Activated CD8-positive, alpha-beta memory T cell treated with anti-CD3 and anti-CD28 coated beads, Interleukin-2, amount 10 ng/mL, durations not matched to agents 7 days and 5 days (primary cell): ENCODE measurements at regions of chr4 and their contacts with region 1.

Region 1: DNA sequence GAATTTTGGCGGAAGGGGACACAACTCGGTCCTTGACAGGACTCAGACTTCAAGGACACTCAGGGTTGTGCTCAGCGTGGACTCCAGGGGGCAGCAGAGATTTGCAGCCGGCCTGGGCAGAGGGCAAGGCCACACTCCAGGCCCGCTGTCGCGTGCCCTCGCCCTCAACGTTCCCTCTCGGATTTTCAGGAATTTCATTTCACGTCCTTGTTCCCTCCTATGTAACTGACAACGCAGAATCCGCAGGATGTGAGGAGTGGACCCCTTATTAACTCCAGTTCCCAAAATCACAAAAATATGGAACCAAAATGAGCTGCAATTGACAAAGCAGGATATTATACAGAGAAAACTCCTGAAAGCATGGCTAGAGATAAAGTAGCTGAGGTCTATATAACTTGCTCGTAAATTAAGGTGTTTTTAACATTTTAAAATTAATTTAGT is 21.0 kb upstream of the DCTD start:
- DNase-seq: peak; percentile 74
- ATAC-seq: peak; percentile 97
- H3K4me3 Mint-ChIP-seq: no peak overlapping the region
- H3K27ac Mint-ChIP-seq: no peak overlapping the region
- H3K4me1 Mint-ChIP-seq: peaks cover 3% of the 10 kb centered on the region
- H3K27me3 Mint-ChIP-seq: peaks cover 24% of the 10 kb centered on the region

Region 2: GRCh38 chr4:182955411-182955810 is 17.2 kb after region 1 on chr4:
- CTCF ChIA-PET with region 1: interaction called, 11 read pairs
- DNase-seq: no peak
- ATAC-seq: no peak
- H3K4me3 Mint-ChIP-seq: no peak overlapping the region
- H3K27ac Mint-ChIP-seq: no peak overlapping the region
- H3K4me1 Mint-ChIP-seq: no peaks in the 10 kb centered on the region
- H3K27me3 Mint-ChIP-seq: no peaks in the 10 kb centered on the region

Region 3: DNA sequence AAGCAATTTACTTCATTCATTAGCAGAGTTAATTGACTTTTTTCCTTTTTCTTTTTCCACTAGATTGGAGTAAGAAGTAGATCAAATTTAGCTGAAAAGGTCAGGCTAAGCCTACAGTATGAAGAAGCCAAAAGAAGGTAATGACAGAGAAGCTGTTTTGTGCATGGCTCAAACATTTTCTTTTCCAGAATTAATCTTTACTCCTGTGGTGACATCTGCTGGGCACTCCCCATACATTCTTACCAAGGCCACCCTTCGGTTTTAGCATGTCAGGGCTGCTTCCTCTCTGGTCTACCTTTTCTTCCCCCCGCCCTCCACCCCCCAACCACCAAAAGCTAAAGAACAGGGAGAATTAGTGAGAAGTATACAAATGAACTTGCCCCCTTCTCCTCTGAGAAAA is 311.6 kb after region 1 on chr4:
- CTCF ChIA-PET with region 1: interaction called, 29 read pairs
- DNase-seq: no peak
- ATAC-seq: no peak
- H3K4me3 Mint-ChIP-seq: no peak overlapping the region
- H3K27ac Mint-ChIP-seq: no peak overlapping the region
- H3K4me1 Mint-ChIP-seq: no peaks in the 10 kb centered on the region
- H3K27me3 Mint-ChIP-seq: peaks cover 30% of the 10 kb centered on the region

Region 4: DNA sequence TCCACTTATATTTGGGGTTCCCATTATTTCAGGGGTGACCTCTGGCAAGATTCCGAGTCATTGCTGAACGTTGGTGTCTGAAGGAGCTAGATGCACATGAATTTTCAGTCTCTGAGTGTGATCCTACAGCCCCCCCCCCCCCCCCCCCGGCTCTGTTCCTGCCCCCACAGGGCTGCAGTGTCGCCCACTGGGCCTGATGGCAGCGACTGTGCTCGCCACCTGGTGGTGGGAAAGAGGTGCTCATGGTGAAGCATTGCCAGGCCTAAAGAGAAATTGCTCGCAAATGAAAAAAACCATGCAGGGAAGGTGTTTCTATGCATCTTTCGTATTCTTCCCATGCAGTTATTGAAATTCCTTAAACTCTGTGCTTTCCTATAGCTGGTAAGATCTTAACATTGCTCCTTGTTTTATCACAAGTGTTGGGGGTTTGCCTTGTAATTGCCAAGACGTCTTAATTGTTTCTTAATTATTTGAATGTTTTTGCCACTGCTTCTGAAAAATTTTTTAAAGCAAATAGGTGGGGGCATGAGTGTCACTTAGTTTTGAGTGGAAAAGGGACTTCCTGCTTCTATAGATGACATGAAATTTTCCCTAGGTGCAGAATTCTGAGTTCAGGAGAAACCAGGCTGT is 318.6 kb after region 1 on chr4:
- CTCF ChIA-PET with region 1: interaction called, 46 read pairs
- DNase-seq: peak; percentile 47
- ATAC-seq: peak; percentile 67
- H3K4me3 Mint-ChIP-seq: no peak overlapping the region
- H3K27ac Mint-ChIP-seq: no peak overlapping the region
- H3K4me1 Mint-ChIP-seq: no peaks in the 10 kb centered on the region
- H3K27me3 Mint-ChIP-seq: peaks cover 30% of the 10 kb centered on the region

Region 5: DNA sequence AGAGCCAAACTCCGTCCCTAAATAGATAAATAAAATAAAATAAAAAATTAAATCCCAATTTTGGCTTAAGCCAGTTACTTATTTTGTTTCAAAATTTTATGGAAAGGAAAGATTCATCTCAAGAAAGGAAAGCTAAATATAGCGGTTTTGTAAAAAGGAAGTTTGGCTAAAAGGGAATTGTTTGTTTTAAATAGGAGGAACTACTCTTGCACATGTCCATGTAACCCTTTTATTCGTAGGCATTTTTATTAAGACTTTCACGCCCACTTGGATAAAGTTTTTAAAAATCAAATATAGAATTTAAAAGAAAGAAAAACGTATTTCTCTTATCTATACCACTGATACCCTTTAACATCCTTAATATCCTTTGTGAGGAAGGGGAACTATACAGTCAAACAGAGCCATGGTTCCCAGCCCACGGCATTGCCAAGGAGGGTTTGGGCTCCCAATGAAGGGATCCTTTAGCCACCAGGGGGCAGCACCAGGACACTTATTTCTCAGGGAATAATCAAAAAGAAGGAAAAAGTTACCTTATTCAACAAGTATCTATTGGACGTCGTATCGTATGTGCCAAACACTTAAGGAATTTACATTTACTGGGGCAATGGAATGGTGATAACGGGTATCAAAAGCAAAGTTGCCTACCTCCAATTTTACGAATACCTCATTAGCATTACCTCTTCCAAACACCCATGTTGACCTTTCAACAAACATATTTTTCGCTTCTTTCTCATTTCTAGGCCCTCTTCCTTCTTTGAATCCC is 533.9 kb after region 1 on chr4:
- CTCF ChIA-PET with region 1: no interaction called
- DNase-seq: peak; percentile 83
- ATAC-seq: peak; percentile 77
- H3K4me3 Mint-ChIP-seq: no peak overlapping the region
- H3K27ac Mint-ChIP-seq: no peak overlapping the region
- H3K4me1 Mint-ChIP-seq: peaks cover 5% of the 10 kb centered on the region
- H3K27me3 Mint-ChIP-seq: peaks cover 4% of the 10 kb centered on the region